ENCODE measurements at regions of chr15 and their contacts with region 1.

Region 1: GRCh38 chr15:72532991-72533601 is 59.0 kb downstream of the ARIH1 start:
- DNase-seq: peak in 1 of 2 experiments; percentile 26
- ATAC-seq: peak in 1 of 2 experiments; percentile 88; a peak in 3 of 6 replicates
- H3K4me3 ChIP-seq: no peak overlapping the region
- H3K27ac ChIP-seq: no peak overlapping the region
- H3K4me1 ChIP-seq: no peaks in the 10 kb centered on the region
- CTCF ChIP-seq: peak; percentile 59
- EP300 ChIP-seq: no peak
- POLR2A ChIP-seq: no peak
- RAD21 ChIP-seq: peak; percentile 62 to 64

Region 2: GRCh38 chr15:72168111-72168808 is 364.8 kb before region 1 on chr15:
- CTCF ChIA-PET with region 1: no interaction called
- POLR2A ChIA-PET with region 1: no interaction called
- DNase-seq: no peak
- ATAC-seq: peak in 1 of 2 experiments; percentile 40; a peak in 3 of 6 replicates
- H3K4me3 ChIP-seq: no peak overlapping the region
- H3K27ac ChIP-seq: no peak overlapping the region
- H3K4me1 ChIP-seq: peaks cover 6% of the 10 kb centered on the region; the same call in 1 of the 3 replicates
- CTCF ChIP-seq: no peak
- EP300 ChIP-seq: no peak
- POLR2A ChIP-seq: no peak
- RAD21 ChIP-seq: no peak

Region 3: GRCh38 chr15:72397796-72398588 is 135.1 kb before region 1 on chr15 and contains the start of gene TMEM202:
- CTCF ChIA-PET with region 1: no interaction called
- POLR2A ChIA-PET with region 1: no interaction called
- DNase-seq: no peak
- ATAC-seq: 0 out of 6 replicates have a peak, but pooled peaks of 1 of the 2 experiments have one; percentile 22
- H3K4me3 ChIP-seq: no peak within 1 kb of the TSS
- H3K27ac ChIP-seq: no peak within 1 kb of the TSS
- H3K4me1 ChIP-seq: no peaks in the 10 kb centered on the region
- CTCF ChIP-seq: no peak
- EP300 ChIP-seq: no peak
- POLR2A ChIP-seq: no peak
- RAD21 ChIP-seq: no peak
- polyA plus RNA-seq, gene TMEM202: not detected in 2 replicates

Region 4: DNA sequence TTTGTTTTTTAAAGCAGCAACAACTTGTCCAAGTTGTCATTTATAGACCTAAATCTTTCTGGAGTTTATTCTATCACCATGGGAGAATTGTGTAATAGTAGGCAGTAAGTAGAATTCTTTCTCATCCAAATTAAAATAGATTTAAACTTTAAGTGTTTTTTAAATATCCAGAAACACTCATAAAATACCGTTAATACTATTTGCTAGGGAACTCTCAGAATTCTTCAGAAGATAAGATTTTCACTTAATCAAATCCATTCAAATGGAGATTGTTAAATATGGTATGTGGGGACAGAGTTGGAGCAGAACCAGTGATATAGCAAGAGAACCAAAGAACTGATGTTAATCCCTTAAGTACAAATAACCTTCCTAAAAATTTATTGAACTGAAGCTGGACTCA is 12.1 kb after region 1 on chr15:
- CTCF ChIA-PET with region 1: interaction called, 11 read pairs
- POLR2A ChIA-PET with region 1: no interaction called
- DNase-seq: no peak
- ATAC-seq: no peak
- H3K4me3 ChIP-seq: no peak overlapping the region
- H3K27ac ChIP-seq: no peak overlapping the region
- H3K4me1 ChIP-seq: no peaks in the 10 kb centered on the region
- CTCF ChIP-seq: no peak
- EP300 ChIP-seq: no peak
- POLR2A ChIP-seq: no peak
- RAD21 ChIP-seq: no peak

Region 5: GRCh38 chr15:72554471-72555425 is 21.7 kb after region 1 on chr15:
- CTCF ChIA-PET with region 1: interaction called, 10 read pairs
- POLR2A ChIA-PET with region 1: no interaction called
- DNase-seq: peak in 1 of 2 experiments; percentile 73
- ATAC-seq: peak; percentile 83 to 89
- H3K4me3 ChIP-seq: no peak overlapping the region
- H3K27ac ChIP-seq: peak overlapping the region in 1 of 2 experiments; percentile 24; a peak in 1 of 6 replicates
- H3K4me1 ChIP-seq: peaks cover 15% of the 10 kb centered on the region
- CTCF ChIP-seq: no peak
- EP300 ChIP-seq: no peak
- POLR2A ChIP-seq: no peak
- RAD21 ChIP-seq: no peak

Region 6: GRCh38 chr15:72579814-72580213 is 46.7 kb after region 1 on chr15:
- CTCF ChIA-PET with region 1: no interaction called
- POLR2A ChIA-PET with region 1: no interaction called
- DNase-seq: no peak
- ATAC-seq: no peak
- H3K4me3 ChIP-seq: no peak overlapping the region
- H3K27ac ChIP-seq: no peak overlapping the region
- H3K4me1 ChIP-seq: no peaks in the 10 kb centered on the region
- CTCF ChIP-seq: no peak
- EP300 ChIP-seq: no peak
- POLR2A ChIP-seq: no peak
- RAD21 ChIP-seq: no peak